ENCODE measurements at regions of chr7 and their contacts with region 1.

Region 1: DNA sequence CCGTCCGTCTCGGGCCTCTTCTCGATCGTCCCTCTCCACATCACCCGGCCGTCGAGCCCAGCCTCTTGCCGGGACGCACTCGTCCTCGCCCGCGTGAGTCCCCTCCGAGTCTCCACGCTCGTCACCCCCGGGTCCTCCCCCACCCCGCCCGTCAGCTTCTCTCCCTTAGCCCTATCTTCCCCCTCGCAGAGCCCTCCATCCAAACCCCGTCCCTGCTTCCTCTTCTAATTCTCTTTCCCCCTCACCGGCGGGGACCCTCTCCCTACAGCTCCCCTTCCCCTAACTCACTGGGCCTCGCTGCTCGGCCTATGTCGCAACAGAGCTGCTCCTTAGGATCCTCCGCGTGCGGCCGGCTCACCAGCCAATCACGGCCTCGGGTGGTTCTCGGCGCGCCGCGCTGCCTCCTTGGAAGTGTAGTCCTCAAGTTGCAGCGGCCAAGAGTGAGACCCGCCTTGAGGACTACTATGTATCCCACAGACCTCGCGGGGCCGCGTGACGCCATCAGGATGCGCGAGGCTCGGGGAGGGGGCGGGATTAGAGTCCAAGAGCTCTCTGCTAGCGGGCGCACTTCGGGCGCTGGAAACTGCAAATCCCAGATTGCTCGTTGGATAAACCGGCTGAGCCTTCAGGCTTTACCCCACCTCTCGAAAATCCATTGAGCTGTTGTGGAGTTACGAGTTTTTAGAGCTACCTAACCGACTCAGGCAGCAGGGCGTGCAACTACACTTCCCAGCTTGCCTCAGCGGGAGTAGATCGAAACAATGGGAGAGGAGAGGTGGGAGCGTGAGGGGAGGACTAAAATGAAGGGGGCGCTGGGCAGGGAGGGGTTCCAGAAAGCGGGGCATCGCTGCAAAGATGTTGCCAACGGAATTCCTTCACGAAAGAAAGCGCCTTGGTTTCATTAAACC is at the start of gene ABCF2:
- DNase-seq: peak; percentile 99
- H3K4me3 Mint-ChIP-seq: peak within 1 kb of the TSS; percentile 99
- H3K27ac Mint-ChIP-seq: peak within 1 kb of the TSS; percentile 99
- H3K4me1 Mint-ChIP-seq: peaks cover 24% of the 10 kb centered on the region
- H3K27me3 Mint-ChIP-seq: no peaks in the 10 kb centered on the region
- CTCF ChIP-seq: no peak
- total RNA-seq, gene ABCF2: 47.3 and 72.4 TPM in 2 replicates

Region 2: DNA sequence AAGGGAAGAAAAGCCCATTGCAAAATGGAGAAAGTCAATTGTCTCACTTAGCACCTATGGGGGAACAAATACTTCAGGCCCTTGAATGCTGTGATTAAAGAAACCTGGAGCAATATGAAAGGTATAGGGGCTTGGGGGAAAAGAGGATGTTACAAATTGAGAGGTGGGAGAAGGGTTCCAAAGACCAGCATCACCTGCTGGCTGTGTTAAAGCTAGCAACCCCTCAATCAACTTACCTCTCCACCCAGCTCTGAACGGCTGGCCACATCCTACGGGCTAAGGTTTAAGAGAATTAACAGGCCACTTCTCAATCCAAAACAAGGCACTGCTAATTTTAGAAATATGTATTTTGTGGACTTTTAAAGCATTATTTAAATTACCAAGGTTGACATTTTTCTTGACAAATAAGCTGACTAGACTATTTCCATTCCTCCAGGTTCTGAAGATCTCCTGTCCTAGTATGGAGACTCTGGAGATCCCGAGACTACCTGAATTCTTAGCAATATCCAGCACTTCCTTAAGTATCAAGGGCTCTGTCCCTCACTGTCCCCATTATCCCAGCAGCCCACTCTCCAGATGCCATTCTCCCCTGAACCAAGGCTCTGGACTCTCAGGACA is 15.9 kb before region 1 on chr7:
- CTCF ChIA-PET with region 1: interaction called, 3 read pairs
- POLR2A ChIA-PET with region 1: interaction called, 7 read pairs
- intact Hi-C with region 1: loop called (anchors 1 kb)
- DNase-seq: no peak
- H3K4me3 Mint-ChIP-seq: no peak overlapping the region
- H3K27ac Mint-ChIP-seq: no peak overlapping the region
- H3K4me1 Mint-ChIP-seq: peaks cover 6% of the 10 kb centered on the region
- H3K27me3 Mint-ChIP-seq: peaks cover under 1% of the 10 kb centered on the region
- CTCF ChIP-seq: no peak

Region 3: DNA sequence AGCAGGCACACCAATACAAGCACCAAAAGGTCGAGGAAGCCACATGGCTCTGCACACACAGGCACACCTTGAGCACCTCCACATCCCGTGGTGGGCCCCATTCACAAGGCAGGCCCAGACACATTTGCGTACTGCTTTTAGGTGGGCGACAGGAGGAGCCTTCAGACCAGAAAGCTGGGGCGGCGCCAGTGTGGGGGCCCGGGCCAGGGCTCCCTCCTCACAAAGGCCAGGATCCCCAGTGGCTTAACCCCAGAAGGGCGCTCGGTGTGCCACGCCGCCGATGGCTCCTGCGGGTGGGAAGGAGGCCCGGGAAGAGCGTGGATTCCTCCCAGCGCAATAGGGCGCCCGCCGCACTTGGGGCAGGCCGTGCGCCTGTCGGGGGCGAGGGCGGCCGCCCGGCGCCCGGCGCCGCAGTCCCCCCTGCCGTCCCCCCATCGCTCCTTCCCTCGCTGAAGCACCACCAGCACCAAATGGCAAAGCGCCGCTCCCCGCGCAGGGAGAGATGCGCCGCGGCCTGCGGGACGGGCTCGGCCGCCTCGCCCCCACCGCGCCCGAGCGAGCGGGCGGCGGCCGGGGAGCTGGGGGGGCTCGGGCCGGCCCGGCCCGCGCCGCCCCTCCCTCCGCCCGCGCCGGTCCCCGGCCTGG is 24.3 kb after region 1 on chr7:
- CTCF ChIA-PET with region 1: no interaction called
- POLR2A ChIA-PET with region 1: interaction called, 19 read pairs
- intact Hi-C with region 1: no loop called
- DNase-seq: peak; percentile 36
- H3K4me3 Mint-ChIP-seq: peak overlapping the region; percentile 63
- H3K27ac Mint-ChIP-seq: no peak overlapping the region
- H3K4me1 Mint-ChIP-seq: peaks cover 36% of the 10 kb centered on the region
- H3K27me3 Mint-ChIP-seq: peaks cover 21% of the 10 kb centered on the region
- CTCF ChIP-seq: no peak

Measured in MCF 10A (cell line).